ENCODE measurements at regions of chrX and their contacts with region 1.

Region 1: GRCh38 chrX:150715184-150715583 is 22.0 kb downstream of the MTMR1 start:
- DNase-seq: no peak
- H3K4me3 ChIP-seq: no peak overlapping the region
- H3K27ac ChIP-seq: no peak overlapping the region
- H3K27me3 ChIP-seq: peaks cover 0 to 49% (median 4%) of the 10 kb centered on the region in 45 donors
- CTCF ChIP-seq: no peak

Region 2: DNA sequence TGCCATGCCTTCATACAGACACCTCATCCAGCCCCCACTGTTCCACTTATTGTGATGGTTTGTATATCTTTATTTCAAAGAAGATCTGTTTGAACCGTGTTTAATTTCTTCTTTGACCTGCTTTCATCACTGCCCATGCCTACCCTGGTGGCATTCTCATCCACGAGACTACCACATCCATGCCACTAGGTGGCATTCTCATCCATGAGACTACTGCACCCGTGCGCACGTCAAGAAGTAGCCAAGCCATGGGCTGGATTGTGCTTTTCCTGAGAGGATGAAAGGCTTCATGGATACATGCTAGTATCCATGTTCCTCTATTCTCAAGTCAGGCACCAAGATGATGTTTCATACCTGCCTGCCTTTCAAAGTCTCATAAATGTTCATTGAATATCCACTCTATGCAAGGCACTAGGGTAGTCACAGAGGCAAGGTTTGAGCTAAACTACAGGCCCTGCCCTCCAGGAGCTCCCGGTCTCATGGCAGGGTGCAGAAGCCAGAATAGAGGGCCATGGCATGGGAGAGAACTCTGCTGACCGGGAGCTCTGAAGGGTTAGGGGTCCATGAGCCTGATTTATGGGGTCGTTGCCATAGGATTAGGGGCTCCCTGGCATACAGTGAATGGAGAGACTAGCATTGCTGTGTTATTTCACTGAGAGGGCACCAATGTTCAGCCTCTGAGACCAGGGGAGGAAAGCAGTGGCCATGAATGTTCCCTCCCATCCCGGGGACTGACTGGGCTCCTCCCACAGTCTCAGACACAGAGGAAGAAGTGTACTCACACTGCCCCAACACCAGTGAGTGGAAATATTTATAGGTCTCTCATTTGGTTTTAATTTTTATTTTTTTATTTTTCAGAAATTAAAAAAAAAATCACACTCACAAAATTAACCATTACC is 752.1 kb before region 1 on chrX:
- intact Hi-C with region 1: loop called (anchors 5 to 10 kb)
- DNase-seq: peak; percentile 22 to 78 (median 56)
- H3K4me3 ChIP-seq: no peak overlapping the region
- H3K27ac ChIP-seq: peak overlapping the region in 2 of 59 donors; percentile 16 to 28
- H3K27me3 ChIP-seq: peaks cover 0 to 48% (median 3%) of the 10 kb centered on the region in 45 donors
- CTCF ChIP-seq: peak; percentile 25 to 81 (median 67)